ENCODE measurements at regions of chr5 and their contacts with region 1.

Region 1: DNA sequence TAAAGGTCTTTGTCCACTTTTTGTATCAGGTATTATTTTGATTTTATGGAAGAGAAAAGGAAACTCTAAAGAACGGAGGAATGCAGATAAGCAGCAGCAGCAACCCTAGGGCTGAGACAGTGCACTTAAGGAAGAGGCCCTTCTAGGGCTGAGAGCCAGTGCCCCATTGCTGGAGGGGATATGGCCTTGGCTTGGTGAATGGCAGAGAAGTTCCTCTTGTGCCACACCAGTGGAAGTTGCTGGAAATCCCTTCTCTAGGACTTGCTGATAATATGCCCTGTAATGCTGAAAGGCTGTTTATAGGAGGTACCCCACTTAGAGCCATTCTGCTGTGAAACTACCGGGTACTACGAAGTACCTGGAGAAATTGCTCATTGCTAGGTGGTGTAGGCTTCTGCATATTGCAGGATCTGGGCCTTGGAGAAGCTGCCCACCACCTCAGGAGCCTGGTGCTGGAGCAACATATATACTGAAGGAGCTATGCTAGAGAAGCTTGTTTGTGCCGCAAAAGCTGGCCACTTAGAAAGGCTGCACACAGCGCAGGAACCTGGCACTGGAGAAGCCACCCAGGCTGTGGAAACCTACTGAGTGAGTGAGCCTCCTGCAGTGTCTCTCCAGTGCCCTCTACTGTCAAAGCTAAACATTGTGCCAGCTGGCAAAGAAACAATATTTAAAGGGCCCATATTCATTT is 9.6 kb upstream of the UBTD2 start:
- DNase-seq: peak; percentile 80
- ATAC-seq: peak; percentile 95
- H3K4me3 ChIP-seq: peak overlapping the region; percentile 43 to 62 (median 43); a peak in 5 of 6 replicates
- H3K27ac ChIP-seq: peak overlapping the region; percentile 29
- H3K4me1 ChIP-seq: peaks cover 22% of the 10 kb centered on the region
- H3K27me3 ChIP-seq: no peaks in the 10 kb centered on the region
- CTCF ChIP-seq: peak; percentile 93
- EP300 ChIP-seq: peak in 1 of 2 experiments; percentile 46; a peak in 1 of 4 replicates
- POLR2A ChIP-seq: no peak
- RAD21 ChIP-seq: peak; percentile 93

Region 2: DNA sequence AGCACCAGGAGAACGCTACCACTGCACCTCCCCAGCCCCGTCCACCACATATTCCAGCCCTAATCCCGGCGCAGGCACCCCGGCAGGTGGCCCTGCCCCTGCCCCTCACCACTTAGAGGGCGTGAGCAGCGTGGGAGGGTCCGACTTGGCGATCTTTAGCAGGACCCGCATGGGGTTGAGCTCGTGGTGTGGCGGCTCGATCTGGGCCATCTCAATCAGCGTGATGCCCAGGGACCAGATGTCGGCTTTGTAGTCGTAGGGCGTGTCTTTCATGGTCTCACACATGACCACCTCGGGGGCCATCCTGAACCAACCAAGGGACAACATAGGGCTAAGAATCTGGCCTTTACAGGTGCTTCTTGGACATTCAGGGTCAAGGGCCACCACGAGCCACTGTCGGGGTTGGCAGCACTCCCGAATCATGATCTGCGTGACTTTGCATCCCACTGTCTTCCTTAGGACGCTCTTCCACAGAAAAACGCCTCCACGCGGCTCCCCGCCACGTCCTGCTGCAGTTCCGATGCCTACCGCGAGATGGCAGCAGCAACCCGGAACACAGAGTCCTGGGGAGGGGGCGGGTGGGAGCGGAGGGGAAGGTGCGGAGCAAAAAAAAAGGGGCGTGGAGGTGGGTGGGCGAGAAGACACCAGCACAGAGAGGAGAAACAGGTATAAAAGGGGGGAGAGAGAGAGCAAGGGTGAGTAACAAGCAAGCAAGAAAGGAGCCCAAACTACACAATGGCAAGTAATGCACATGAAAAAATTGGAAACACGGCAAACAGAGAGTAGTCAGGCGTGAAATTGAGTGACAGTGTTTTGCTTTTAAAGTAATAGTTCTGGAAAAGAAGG is 186.5 kb before region 1 on chr5:
- CTCF ChIA-PET with region 1: interaction called, 12 read pairs
- POLR2A ChIA-PET with region 1: no interaction called
- in situ Hi-C with region 1: loop called (anchors 10 kb)
- intact Hi-C with region 1: loop called (anchors 1 kb)
- DNase-seq: no peak
- ATAC-seq: peak; percentile 53
- H3K4me3 ChIP-seq: no peak overlapping the region
- H3K27ac ChIP-seq: no peak overlapping the region
- H3K4me1 ChIP-seq: peaks cover 23% of the 10 kb centered on the region
- H3K27me3 ChIP-seq: no peaks in the 10 kb centered on the region
- CTCF ChIP-seq: peak; percentile 90
- EP300 ChIP-seq: no peak
- POLR2A ChIP-seq: no peak
- RAD21 ChIP-seq: peak; percentile 53; the same call in 1 of the 2 replicates

Region 3: DNA sequence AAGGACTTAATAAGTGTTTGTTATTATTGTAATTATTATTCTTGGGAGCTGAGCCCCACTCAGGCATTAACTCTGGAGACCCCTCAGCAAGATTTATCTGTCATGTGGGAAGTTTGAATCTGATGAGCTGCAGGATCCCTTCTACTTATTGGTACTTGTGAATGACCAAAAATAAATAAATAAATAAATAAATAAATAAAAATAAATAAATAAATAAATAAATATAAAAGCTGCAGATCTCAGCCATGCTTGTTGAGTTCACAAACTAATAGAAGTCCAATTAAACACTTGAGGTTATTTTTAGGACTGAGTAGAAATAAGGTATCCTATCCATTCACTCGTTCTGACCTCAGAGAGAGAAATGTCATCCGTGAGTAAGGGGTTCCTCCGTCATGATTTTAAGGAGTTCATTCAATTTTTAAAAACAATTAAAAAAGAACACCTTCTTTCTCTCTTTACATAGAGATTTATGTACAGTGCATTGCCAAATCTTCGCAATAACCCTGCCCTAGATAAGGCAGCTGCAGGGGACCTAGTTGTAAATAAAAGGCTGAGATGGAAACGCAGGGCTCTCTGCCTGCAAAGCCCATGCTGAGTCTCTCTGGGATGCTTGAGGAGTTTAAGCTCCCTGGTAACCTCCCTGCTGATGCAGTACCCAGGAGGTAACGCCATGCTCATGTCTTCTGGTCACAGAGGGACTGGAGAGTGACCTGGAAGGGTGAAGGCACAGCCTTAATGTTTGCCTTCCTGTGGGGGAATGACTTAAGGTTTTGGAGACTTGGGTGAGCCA is 98.0 kb before region 1 on chr5:
- CTCF ChIA-PET with region 1: no interaction called
- POLR2A ChIA-PET with region 1: no interaction called
- in situ Hi-C with region 1: no loop called
- intact Hi-C with region 1: no loop called
- DNase-seq: no peak
- ATAC-seq: no peak
- H3K4me3 ChIP-seq: no peak overlapping the region
- H3K27ac ChIP-seq: no peak overlapping the region
- H3K4me1 ChIP-seq: peaks cover 12% of the 10 kb centered on the region
- H3K27me3 ChIP-seq: no peaks in the 10 kb centered on the region
- CTCF ChIP-seq: no peak
- EP300 ChIP-seq: no peak
- POLR2A ChIP-seq: no peak
- RAD21 ChIP-seq: no peak

Region 4: GRCh38 chr5:172315587-172316493 is 22.6 kb after region 1 on chr5:
- CTCF ChIA-PET with region 1: no interaction called
- POLR2A ChIA-PET with region 1: no interaction called
- in situ Hi-C with region 1: no loop called
- intact Hi-C with region 1: no loop called
- DNase-seq: no peak
- ATAC-seq: no peak
- H3K4me3 ChIP-seq: no peak overlapping the region
- H3K27ac ChIP-seq: no peak overlapping the region
- H3K4me1 ChIP-seq: no peaks in the 10 kb centered on the region
- H3K27me3 ChIP-seq: peaks cover 0 to 7% of the 10 kb centered on the region in 2 experiments; a peak in 1 of 5 replicates
- CTCF ChIP-seq: no peak
- EP300 ChIP-seq: no peak
- POLR2A ChIP-seq: no peak
- RAD21 ChIP-seq: no peak

Region 5: GRCh38 chr5:172454358-172455086 is 161.3 kb after region 1 on chr5 and contains the start of gene SH3PXD2B:
- CTCF ChIA-PET with region 1: no interaction called
- POLR2A ChIA-PET with region 1: no interaction called
- in situ Hi-C with region 1: no loop called
- intact Hi-C with region 1: loop called (anchors 5 kb)
- DNase-seq: peak; percentile 52
- ATAC-seq: peak; percentile 59
- H3K4me3 ChIP-seq: peak within 1 kb of the TSS; percentile 68 to 81 (median 80)
- H3K27ac ChIP-seq: peak within 1 kb of the TSS; percentile 48
- H3K4me1 ChIP-seq: peaks cover 53% of the 10 kb centered on the region
- H3K27me3 ChIP-seq: no peaks in the 10 kb centered on the region; a peak in 2 of 5 replicates
- CTCF ChIP-seq: no peak
- EP300 ChIP-seq: no peak
- POLR2A ChIP-seq: peak in 1 of 2 experiments; percentile 66; a peak in 2 of 4 replicates
- RAD21 ChIP-seq: no peak; the same call in 1 of the 2 replicates
- total RNA-seq, gene SH3PXD2B: 3.4 and 3.8 TPM in 2 replicates